Activated B cell treated with CpG ODN at 0.5 μM for 24 hours (primary cell): ENCODE measurements at regions of chr11 and their contacts with region 1.

Region 1: GRCh38 chr11:62645956-62646824 is at the start of gene GANAB:
- DNase-seq: peak; percentile 89
- ATAC-seq: peak; percentile 99
- H3K4me3 Mint-ChIP-seq: peak within 1 kb of the TSS; percentile 93
- H3K27ac Mint-ChIP-seq: peak within 1 kb of the TSS; percentile 86
- H3K4me1 Mint-ChIP-seq: peaks cover 34% of the 10 kb centered on the region
- H3K27me3 Mint-ChIP-seq: no peaks in the 10 kb centered on the region
- CTCF ChIP-seq: no peak
- total RNA-seq, gene GANAB: 187 and 189 TPM in 2 replicates

Region 2: GRCh38 chr11:62315431-62315830 is 330.8 kb before region 1 on chr11:
- CTCF ChIA-PET with region 1: no interaction called
- POLR2A ChIA-PET with region 1: interaction called, 12 read pairs
- intact Hi-C with region 1: no loop called
- DNase-seq: no peak
- ATAC-seq: no peak
- H3K4me3 Mint-ChIP-seq: no peak overlapping the region
- H3K27ac Mint-ChIP-seq: no peak overlapping the region
- H3K4me1 Mint-ChIP-seq: peaks cover 12% of the 10 kb centered on the region
- H3K27me3 Mint-ChIP-seq: peaks cover 39% of the 10 kb centered on the region
- CTCF ChIP-seq: no peak

Region 3: DNA sequence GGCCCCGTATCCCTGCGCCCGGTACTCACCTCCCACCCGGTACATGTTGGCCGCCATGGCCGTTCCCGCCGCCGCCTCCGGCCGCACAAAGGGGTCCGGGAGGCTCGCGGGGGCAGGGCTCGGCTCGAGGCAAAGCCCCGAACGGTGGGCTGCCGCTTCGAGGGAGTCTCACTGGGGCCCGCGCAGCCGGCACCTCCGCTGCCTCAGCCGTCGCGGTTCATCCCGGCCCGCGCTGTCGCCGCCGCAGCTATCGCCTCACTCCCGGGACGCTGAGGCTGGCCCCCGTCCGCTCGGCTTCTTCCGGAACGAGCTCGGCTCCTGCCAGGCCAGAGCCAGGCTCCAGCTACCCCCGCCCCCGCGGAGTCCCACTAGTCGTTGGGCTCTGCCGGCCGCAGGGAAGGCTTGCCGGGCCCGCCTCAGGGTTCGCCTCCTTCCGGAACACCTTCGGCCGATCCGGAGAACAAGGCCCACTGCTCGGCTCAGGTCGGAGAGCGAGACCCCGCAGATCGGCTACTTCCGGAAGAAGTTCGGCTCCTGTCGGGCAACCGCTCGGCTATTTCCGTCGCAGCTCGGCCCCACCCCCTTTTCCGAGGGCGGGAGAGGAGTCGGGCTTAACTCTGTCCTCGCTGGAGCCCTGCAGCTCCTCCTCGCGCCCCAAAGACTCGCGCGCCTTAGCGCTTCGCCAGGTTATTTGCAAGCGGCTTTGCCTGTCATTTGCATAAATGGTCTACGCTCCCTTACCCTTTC is 44.6 kb before region 1 on chr11 and contains the start of gene MTA2:
- CTCF ChIA-PET with region 1: no interaction called
- POLR2A ChIA-PET with region 1: interaction called, 22 read pairs
- intact Hi-C with region 1: no loop called
- DNase-seq: peak; percentile 100
- ATAC-seq: peak; percentile 81
- H3K4me3 Mint-ChIP-seq: peak within 1 kb of the TSS; percentile 92
- H3K27ac Mint-ChIP-seq: peak within 1 kb of the TSS; percentile 97
- H3K4me1 Mint-ChIP-seq: peaks cover 45% of the 10 kb centered on the region
- H3K27me3 Mint-ChIP-seq: no peaks in the 10 kb centered on the region
- CTCF ChIP-seq: no peak
- total RNA-seq, gene MTA2: 170 and 175 TPM in 2 replicates

Region 4: DNA sequence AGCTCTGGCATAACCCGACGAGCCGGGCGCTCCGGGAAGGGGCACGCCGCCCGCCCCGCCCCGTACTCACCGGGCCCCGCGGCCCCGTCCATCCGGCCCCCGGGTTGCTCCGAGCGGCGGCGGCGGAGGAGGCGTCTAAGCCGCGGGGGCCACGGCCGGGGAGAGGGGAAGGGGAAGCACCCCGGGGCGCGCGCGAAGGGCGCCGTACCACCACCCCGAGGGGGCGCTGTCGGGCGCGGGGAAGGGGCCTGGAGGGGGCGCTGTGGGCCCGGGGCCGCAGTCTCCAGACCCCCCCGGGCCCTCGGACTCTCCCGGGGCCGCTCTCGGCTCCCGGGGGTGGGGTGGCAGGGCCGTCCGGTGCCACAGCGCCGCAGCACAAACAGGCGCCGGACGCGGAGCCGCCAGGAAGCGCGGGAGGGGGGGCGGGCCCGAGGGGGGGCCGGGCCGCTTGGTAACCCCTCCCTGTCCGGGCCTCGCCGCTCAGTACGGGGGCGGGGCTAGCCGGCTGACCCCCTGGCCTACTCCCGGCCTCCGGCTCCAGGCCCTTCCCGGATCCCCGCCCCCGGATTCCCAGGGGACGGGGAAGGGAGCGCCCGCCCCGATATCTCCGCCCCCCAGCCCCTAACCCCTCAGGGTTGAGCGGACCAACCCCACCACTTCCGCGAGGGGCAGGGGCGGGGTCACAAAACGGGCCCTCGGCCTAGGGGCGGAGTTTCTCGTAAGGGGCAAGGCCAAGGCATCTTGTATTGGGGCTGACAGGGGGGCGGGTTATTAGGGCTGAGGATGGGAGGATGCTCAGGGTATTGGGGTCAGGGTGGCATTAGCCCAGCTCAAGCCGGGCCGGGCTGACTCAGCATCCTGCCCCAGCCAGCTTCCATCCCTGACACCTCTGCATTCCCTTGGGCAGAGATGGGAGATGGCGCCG is 33.6 kb before region 1 on chr11 and contains the starts of genes EML3 and ROM1:
- CTCF ChIA-PET with region 1: no interaction called
- POLR2A ChIA-PET with region 1: interaction called, 8 read pairs
- intact Hi-C with region 1: loop called (anchors 2 kb)
- DNase-seq: peak; percentile 95
- ATAC-seq: peak; percentile 82
- H3K4me3 Mint-ChIP-seq: peak within 1 kb of the TSS; percentile 93
- H3K27ac Mint-ChIP-seq: peak within 1 kb of the TSS; percentile 95
- H3K4me1 Mint-ChIP-seq: peaks cover 27% of the 10 kb centered on the region
- H3K27me3 Mint-ChIP-seq: no peaks in the 10 kb centered on the region
- CTCF ChIP-seq: peak; percentile 59
- total RNA-seq, gene EML3: 115 and 128 TPM in 2 replicates
- total RNA-seq, gene ROM1: 0.89 and 2.6 TPM in 2 replicates

Region 5: DNA sequence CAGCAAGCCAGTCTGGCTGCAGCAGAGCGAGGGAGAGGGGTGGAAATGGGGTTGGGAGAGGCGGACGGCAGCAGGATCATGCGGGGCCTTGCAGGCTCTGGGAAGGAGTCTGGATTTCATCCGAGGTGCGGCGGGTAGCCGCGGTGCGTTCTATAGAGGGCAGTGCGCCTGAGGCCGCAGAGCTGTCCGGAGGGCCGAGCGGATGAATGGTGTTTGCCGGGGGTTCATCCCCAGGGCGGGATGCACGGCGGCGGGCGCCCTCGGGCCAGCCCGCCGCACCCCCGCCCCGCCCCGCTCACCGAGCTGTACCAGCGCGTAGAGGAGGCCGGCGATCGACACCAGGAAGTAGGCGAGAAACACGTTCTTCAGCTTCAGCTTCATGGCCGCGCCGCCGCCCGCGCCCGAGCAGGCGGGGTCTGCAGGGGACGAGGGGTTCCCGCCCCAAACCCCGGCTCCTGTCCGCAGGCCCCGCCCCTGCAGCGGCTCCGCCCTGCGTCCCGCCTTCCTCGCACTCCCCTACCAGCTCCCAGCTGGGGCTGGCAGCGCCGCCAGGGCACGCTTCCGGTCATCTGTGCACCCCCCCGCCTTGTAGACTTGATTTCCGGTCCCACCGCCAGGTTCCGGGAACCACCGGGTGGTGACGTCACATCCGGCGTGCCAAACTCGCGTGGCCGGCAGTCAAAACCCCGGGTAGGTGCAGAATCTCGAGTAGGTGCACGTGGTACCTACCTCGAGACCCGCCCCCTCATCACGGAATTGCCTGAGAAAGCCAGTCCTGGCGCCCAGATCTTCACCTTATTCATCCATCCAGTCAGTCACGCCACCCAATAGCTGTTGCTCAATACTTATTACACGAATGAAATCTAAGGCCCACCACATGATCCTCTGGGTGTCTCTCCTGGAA is 24.4 kb before region 1 on chr11 and contains the start of gene B3GAT3:
- CTCF ChIA-PET with region 1: no interaction called
- POLR2A ChIA-PET with region 1: interaction called, 32 read pairs
- intact Hi-C with region 1: loop called (anchors 1 kb)
- DNase-seq: peak; percentile 93
- ATAC-seq: peak; percentile 92
- H3K4me3 Mint-ChIP-seq: peak within 1 kb of the TSS; percentile 90
- H3K27ac Mint-ChIP-seq: peak within 1 kb of the TSS; percentile 93
- H3K4me1 Mint-ChIP-seq: peaks cover 19% of the 10 kb centered on the region
- H3K27me3 Mint-ChIP-seq: no peaks in the 10 kb centered on the region
- CTCF ChIP-seq: no peak
- total RNA-seq, gene B3GAT3: 48.8 and 56.6 TPM in 2 replicates

Region 6: GRCh38 chr11:62627714-62628113 is 18.5 kb before region 1 on chr11:
- CTCF ChIA-PET with region 1: no interaction called
- POLR2A ChIA-PET with region 1: interaction called, 32 read pairs
- intact Hi-C with region 1: loop called (anchors 1 kb)
- DNase-seq: no peak
- ATAC-seq: peak; percentile 42
- H3K4me3 Mint-ChIP-seq: no peak overlapping the region
- H3K27ac Mint-ChIP-seq: no peak overlapping the region
- H3K4me1 Mint-ChIP-seq: no peaks in the 10 kb centered on the region
- H3K27me3 Mint-ChIP-seq: no peaks in the 10 kb centered on the region
- CTCF ChIP-seq: no peak

Region 7: GRCh38 chr11:62678770-62679696 is 32.8 kb after region 1 on chr11 and contains the start of gene UBXN1:
- CTCF ChIA-PET with region 1: interaction called, 3 read pairs
- POLR2A ChIA-PET with region 1: interaction called, 400 read pairs
- intact Hi-C with region 1: loop called (anchors 1 kb)
- DNase-seq: peak; percentile 77
- ATAC-seq: peak; percentile 74
- H3K4me3 Mint-ChIP-seq: peak within 1 kb of the TSS; percentile 91
- H3K27ac Mint-ChIP-seq: peak within 1 kb of the TSS; percentile 96
- H3K4me1 Mint-ChIP-seq: peaks cover 41% of the 10 kb centered on the region
- H3K27me3 Mint-ChIP-seq: no peaks in the 10 kb centered on the region
- CTCF ChIP-seq: no peak
- total RNA-seq, gene UBXN1: 204 and 205 TPM in 2 replicates